Activated T-helper 1 cell treated with anti-CD3 and anti-CD28 coated beads, Interleukin-12 subunit alpha, Interleukin-12 subunit beta, Interleukin-2, Interleukin-4 antibody, amounts not matched to agents 30 ng/mL and 10 ng/mL and 1 ng/mL, durations not matched to agents 14 hours and 24 hours and 36 hours (primary cell): ENCODE measurements at regions of chr7 and their contacts with region 1.

Region 1: DNA sequence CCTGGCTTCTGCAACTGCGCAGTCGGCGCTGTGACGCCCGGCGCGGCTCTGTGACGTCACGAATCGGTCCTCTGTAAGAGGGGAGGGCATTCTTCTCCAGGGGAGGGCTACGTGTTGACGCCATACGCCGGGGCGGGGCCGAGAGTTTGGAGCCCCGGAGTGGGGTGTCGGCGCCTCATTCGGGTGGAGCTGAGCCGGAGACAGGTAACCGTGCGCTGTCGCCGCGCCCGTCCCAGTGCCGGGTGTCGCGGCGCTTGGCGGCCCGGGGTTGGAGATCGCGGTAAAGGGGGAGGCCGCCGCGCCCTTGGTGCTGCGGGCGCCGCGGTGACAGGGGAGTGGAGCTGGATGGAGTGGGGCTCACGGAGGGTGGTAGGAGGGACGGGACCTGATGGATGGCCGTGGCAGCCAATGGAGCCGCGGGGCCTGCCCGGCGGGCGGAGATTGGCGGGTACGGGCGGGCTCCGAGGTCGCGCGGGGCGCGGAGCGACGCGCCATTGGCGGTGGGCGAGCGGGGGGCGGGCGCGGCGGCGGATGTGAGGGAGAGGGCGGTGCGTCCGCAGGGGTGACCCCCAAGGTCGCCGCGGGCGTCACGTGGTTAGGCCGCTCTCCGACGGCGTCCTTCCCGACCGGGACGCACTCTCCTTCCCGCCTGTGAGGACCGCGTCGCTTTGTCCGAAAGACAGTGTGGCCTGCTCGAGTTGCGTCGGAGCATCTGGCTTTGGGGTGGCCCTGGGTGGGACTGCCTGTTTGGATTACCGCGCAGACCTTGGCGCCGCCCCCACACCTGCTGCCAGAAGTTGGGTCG is at the start of gene OGDH:
- DNase-seq: peak; percentile 98
- H3K4me3 Mint-ChIP-seq: peak within 1 kb of the TSS; percentile 98
- H3K27ac Mint-ChIP-seq: peak within 1 kb of the TSS; percentile 99
- H3K4me1 Mint-ChIP-seq: peaks cover 39% of the 10 kb centered on the region
- H3K27me3 Mint-ChIP-seq: peaks cover 10% of the 10 kb centered on the region
- total RNA-seq, gene OGDH: 101 and 105 TPM in 2 replicates

Region 2: DNA sequence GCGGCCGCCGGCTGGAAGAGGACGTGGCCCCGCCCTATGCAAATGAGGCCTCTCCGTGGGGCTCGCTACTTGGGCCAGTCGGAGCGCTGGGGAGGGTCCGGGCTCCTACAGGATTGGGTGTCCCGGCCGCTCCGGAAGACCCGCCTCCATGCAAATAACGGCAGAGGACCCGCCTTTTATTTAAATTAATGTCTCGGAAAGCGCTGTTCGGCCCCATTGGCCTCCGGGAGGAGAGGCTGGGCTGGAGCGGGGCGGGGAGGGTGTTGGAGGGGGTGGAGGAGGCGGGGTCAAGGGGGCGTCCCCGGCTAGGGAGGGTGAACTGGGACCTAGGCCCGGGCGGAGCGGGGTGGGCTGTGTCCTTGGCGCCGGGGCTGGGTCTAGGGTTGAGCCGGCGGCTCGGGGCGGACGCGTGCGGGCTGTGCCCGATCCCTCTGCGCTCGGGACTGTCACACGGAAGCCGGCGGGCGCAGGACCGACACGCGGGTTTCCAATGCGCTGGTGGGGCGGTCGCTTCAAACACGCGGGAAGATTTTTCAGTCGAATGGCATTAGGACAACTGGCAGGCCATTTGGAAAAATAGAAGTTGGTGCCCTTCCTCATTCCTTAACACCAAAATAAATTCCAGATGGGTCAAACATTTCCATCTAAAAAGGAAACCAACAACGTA is 524.0 kb before region 1 on chr7:
- intact Hi-C with region 1: loop called (anchors 1 kb)
- DNase-seq: peak; percentile 97
- H3K4me3 Mint-ChIP-seq: peak overlapping the region; percentile 90
- H3K27ac Mint-ChIP-seq: peak overlapping the region; percentile 84
- H3K4me1 Mint-ChIP-seq: peaks cover 28% of the 10 kb centered on the region
- H3K27me3 Mint-ChIP-seq: no peaks in the 10 kb centered on the region

Region 3: DNA sequence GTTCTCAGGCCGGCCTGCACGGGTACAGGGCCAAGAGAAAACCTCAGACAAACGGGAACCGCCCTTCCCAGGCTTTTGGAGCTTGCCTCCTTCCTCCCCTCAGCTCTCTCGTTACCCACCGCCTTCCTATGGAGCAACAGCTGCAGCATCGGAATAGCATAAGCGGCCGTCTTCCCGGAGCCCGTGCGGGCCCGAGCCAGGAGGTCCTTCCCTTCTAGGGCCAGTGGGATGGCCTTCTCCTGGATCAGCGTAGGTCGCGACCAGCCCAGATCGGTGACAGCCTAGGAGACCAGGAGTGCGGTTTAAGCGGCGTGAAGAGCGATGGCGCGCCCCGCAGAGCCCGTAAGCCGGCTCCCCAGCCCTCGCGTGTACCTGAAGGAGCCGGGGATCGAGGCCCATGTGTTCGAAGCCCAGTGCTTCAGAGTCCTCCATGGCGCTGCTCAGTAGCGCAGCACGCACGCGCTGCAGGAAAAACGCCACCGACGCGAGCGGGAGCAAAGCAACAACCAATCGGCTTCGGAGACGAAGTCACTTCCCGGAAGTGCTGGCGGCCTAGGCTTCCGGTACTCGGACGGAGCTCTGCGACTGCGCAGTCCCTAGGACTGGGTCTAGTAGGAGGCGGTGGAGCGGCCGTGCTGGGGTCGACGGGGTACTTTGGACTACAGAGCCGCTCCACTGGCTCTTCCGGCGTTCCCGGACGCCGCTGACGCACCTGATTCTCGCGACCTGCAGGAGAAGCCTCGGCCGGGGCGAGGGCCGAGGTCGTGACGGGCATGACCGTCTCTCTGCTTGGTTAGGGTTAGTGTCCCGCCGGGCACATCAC is 33.0 kb before region 1 on chr7 and contains the start of gene DDX56:
- intact Hi-C with region 1: loop called (anchors 2 kb)
- DNase-seq: peak; percentile 93
- H3K4me3 Mint-ChIP-seq: peak within 1 kb of the TSS; percentile 88
- H3K27ac Mint-ChIP-seq: peak within 1 kb of the TSS; percentile 95
- H3K4me1 Mint-ChIP-seq: peaks cover 32% of the 10 kb centered on the region
- H3K27me3 Mint-ChIP-seq: no peaks in the 10 kb centered on the region
- total RNA-seq, gene DDX56: 165 and 166 TPM in 2 replicates

Region 4: GRCh38 chr7:44622307-44623151 is 15.9 kb after region 1 on chr7:
- intact Hi-C with region 1: loop called (anchors 1 kb)
- DNase-seq: peak; percentile 40
- H3K4me3 Mint-ChIP-seq: peak overlapping the region; percentile 60
- H3K27ac Mint-ChIP-seq: peak overlapping the region; percentile 94
- H3K4me1 Mint-ChIP-seq: peaks cover 83% of the 10 kb centered on the region
- H3K27me3 Mint-ChIP-seq: no peaks in the 10 kb centered on the region

Region 5: GRCh38 chr7:44748045-44748947 is 141.6 kb after region 1 on chr7 and contains the start of gene ZMIZ2:
- intact Hi-C with region 1: loop called (anchors 1 kb)
- DNase-seq: peak; percentile 88
- H3K4me3 Mint-ChIP-seq: peak within 1 kb of the TSS; percentile 92
- H3K27ac Mint-ChIP-seq: peak within 1 kb of the TSS; percentile 95
- H3K4me1 Mint-ChIP-seq: peaks cover 45% of the 10 kb centered on the region
- H3K27me3 Mint-ChIP-seq: no peaks in the 10 kb centered on the region
- total RNA-seq, gene ZMIZ2: 123 and 129 TPM in 2 replicates

Region 6: GRCh38 chr7:44914992-44915607 is 308.4 kb after region 1 on chr7:
- intact Hi-C with region 1: loop called (anchors 1 kb)
- DNase-seq: peak; percentile 78
- H3K4me3 Mint-ChIP-seq: peak overlapping the region; percentile 67
- H3K27ac Mint-ChIP-seq: peak overlapping the region; percentile 85
- H3K4me1 Mint-ChIP-seq: peaks cover 16% of the 10 kb centered on the region
- H3K27me3 Mint-ChIP-seq: peaks cover 2% of the 10 kb centered on the region

Region 7: GRCh38 chr7:45111298-45112223 is 504.9 kb after region 1 on chr7 and contains the start of gene TBRG4:
- intact Hi-C with region 1: loop called (anchors 1 kb)
- DNase-seq: peak; percentile 94
- H3K4me3 Mint-ChIP-seq: peak within 1 kb of the TSS; percentile 96
- H3K27ac Mint-ChIP-seq: peak within 1 kb of the TSS; percentile 97
- H3K4me1 Mint-ChIP-seq: peaks cover 39% of the 10 kb centered on the region
- H3K27me3 Mint-ChIP-seq: peaks cover 12% of the 10 kb centered on the region
- total RNA-seq, gene TBRG4: 176 and 195 TPM in 2 replicates